Sigmoid colon (tissue), 7 donors: ENCODE measurements at regions of chr17 and their contacts with region 1.

Region 1: DNA sequence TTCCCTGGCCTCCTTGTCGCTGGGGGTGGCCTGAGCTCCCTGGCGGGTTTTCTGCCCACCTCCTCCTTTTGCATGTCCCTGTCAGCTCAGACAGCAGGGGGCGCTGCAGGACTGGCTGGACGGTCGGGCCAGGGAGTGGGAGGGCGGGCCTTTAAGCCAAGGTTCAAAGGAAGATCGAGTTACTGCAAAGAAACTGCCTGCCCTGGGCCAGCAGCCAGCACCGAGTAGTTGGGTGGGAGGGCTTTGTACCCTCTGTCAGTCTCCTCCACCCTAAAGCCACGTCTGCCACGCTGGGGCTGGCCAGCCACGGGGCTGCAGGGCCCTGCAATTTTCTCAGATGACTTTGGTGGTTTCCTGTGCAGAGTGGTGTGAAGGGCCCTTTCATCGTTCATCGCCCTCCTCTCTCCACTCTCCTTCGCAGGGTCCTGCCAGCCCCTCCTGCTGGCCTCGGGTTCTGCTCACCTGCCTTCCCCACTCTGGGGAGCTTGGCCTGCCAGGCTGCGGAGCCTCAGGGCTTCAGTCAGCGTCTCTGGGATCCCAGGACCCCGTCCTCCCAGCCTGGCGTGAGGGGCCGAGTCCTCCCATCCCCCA is 12.3 kb downstream of the GPR142 start:
- DNase-seq: peak; percentile 94
- H3K4me3 ChIP-seq: peak overlapping the region in 2 of 4 donors; percentile 28 to 31
- H3K27ac ChIP-seq: peak overlapping the region in 3 of 4 donors; percentile 19 to 41 (median 32)
- H3K4me1 ChIP-seq: peaks cover 0 to 15% (median 13%) of the 10 kb centered on the region in 4 donors
- H3K27me3 ChIP-seq: no peaks in the 10 kb centered on the region
- CTCF ChIP-seq: peak; percentile 89 to 98 (median 97)
- EP300 ChIP-seq: no peak
- POLR2A ChIP-seq: no peak

Region 2: DNA sequence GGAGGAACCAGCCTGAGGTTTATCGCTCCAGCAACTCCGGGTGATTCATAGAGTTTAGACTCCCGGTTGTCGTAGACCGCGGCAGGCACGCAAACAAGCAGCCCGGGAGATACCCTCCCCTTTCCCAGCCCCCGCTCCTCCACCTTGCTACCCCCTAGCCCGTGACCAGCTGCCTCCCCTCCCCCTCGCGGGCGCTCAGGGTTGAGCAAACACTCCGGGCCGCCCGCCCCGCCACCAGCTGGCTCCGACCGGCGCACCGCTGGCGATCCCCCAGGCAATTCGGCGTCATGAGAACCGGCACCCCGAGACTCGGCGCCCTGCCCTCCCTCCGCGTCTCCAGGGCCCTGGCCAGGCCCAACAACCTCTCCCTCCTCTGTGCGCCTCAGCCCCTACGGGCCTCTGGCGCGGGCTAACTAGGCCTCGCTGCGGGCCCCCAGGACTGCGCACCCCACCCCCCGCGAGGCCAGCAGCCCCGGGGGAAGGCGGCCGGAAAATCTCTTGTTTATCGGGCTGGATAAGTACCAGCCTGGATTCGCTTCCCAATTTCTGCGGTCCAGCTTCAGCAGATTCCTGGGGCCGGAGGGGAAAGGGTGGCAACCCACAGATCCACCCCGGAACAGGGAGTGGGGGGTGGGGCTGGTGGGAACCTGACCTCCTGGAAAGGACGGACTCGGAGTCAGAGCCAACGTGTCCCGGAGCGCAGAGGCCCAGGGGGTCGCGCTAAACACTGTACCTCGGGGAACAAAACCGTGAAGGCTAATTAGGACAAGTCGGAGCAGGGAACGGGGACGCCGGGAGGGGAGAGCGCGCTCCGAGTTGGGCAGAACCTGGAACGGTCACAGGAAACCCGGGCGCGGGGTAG is 51.3 kb after region 1 on chr17:
- intact Hi-C with region 1: loop called (anchors 2 kb)
- DNase-seq: peak; percentile 94
- H3K4me3 ChIP-seq: peak overlapping the region; percentile 46 to 74 (median 58)
- H3K27ac ChIP-seq: peak overlapping the region; percentile 79 to 87 (median 82)
- H3K4me1 ChIP-seq: peaks cover 0 to 34% (median 23%) of the 10 kb centered on the region in 4 donors
- H3K27me3 ChIP-seq: peaks cover 0 to 11% (median 0%) of the 10 kb centered on the region in 3 donors
- CTCF ChIP-seq: no peak
- EP300 ChIP-seq: peak in 3 of 4 donors; percentile 42 to 74 (median 51)
- POLR2A ChIP-seq: peak; percentile 14 to 19

Region 3: GRCh38 chr17:74601944-74602572 is 222.5 kb after region 1 on chr17:
- intact Hi-C with region 1: loop called (anchors 10 kb)
- DNase-seq: no peak
- H3K4me3 ChIP-seq: no peak overlapping the region
- H3K27ac ChIP-seq: no peak overlapping the region
- H3K4me1 ChIP-seq: peaks cover 0 to 17% (median 14%) of the 10 kb centered on the region in 4 donors
- H3K27me3 ChIP-seq: no peaks in the 10 kb centered on the region
- CTCF ChIP-seq: peak in 3 of 4 experiments; percentile 22 to 51 (median 23)
- EP300 ChIP-seq: no peak
- POLR2A ChIP-seq: no peak